HEK293T (cell line): ENCODE measurements at regions of chr6 and their contacts with region 1.

Region 1: DNA sequence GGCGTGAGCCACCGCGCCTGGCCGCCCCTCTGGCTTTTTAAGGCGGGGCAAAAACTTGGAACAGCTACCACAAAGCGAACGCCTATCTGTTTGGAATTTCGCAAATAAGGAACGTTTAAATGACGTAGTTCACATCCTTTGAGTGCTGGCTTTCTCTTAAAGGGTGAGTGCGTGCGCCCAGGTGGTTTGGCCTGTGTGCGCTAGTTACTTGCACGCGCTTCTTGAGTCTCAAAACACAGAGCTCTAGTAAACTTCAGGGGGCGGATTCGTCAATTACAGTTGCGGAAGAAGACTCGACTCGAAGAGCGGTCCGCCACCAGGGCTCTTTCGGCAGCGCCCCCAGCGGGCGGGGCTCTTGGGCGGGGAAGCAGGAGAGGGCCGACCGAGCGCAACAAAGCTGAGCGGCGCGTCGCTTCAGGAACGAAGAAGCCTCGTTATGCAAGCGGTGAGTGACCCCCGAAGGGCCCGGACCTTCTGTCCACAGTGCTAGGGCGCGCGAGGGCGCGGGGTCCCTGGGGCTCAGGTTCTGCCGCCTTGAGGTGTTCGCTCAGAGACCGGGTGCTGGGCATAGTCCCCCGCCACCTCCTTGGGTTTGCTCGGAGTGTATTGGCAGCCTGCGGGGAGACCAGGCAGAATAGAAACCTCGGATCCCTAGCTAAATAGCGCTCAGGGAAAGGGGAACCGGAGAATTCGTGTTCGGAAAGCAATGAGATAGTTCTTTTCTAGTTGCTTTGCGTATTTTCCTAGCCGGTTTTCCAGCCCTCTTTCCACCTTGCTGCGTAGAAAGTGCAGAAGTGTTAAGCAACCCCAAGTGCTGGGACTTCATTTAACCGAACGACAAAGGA is at the start of gene SYCP2L:
- DNase-seq: peak; percentile 77

Region 2: DNA sequence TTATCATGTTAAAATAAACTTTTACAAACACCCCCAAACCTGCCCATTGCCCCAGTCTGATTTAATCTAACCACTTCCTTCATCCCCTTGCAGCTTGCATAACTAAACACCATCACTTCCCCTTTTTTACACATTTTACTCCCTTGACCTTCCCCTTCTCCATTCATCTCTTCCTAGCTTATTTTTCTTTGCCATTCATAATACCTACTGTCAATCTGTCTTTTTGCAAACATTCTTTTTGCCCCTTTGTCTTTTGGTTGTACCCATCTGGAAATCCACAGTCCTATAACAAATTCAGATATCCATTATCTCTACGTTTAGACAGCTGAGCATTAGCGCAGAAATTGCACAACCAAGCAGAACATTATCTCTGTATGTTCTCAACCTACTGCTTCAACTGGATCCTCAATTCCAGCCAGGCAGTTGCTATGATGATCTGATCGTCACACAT is 243.7 kb before region 1 on chr6:
- CTCF ChIA-PET with region 1: no interaction called
- POLR2A ChIA-PET with region 1: no interaction called
- DNase-seq: no peak

Region 3: GRCh38 chr6:10800829-10801535 is 85.9 kb before region 1 on chr6:
- CTCF ChIA-PET with region 1: no interaction called
- POLR2A ChIA-PET with region 1: no interaction called
- DNase-seq: peak; percentile 80

Region 4: DNA sequence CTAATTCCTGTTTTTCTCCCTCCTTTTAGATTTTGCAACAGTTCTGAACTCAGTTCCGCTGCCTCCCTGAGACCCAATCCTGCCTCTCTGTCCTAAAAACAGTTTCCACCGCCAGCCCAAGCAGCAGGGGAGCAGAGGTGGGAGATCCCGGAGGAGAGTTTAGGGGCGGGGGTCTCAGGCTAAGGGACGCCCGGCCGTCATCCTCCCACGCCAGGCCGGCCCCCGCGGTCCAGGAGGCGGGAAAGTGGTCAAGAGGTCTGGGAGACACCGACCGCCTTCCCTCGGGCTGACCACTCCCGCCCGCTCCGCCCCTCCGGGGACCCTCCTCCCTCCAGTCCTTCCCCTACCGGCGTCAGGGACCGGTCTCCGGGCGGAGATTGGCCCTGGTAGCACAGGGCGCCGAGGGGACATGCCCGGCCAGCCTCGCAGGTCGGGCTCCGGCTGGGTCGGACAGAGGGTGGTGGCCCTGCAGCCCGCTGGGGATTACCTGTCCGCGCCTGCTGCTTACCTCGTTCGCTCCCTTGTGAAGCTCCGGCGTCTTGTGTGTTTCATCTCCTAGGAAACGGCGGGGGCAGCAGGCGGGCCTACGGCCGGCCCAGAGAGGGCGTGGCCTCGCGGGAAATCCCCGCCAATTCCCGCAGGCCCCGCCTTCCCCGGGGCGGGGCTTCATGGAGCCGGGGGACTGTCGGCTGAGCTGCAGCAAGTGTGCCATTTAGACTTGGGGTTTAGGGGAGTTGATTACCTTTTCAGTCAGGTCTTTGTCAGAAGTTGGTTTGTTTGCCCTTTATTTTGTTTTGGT is 48.7 kb before region 1 on chr6 and contains the start of gene MAK:
- CTCF ChIA-PET with region 1: interaction called, 3 read pairs
- POLR2A ChIA-PET with region 1: interaction called, 18 read pairs
- DNase-seq: peak; percentile 97

Region 5: DNA sequence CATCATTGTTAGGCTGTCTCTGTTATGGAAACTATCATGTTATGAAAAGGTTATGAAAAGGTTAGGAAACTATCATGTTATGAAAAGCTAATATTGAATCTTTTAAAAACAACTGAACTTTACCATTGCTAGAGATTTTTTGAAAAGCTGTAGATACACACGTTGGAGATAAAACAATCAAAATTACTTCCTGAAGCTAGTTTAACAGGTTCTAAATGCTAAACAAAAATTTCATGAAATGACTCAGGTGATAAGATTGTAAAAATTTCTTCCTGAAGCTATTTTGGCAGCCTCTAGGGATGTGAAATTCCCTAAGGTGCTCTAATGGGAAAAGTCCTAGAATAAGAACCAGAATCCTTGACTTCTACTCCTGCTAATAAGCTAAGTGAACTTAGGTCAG is 13.6 kb before region 1 on chr6:
- CTCF ChIA-PET with region 1: interaction called, 8 read pairs
- POLR2A ChIA-PET with region 1: interaction called, 23 read pairs
- DNase-seq: no peak

Region 6: GRCh38 chr6:11007715-11008608 is 121.0 kb after region 1 on chr6:
- CTCF ChIA-PET with region 1: no interaction called
- POLR2A ChIA-PET with region 1: no interaction called
- DNase-seq: no peak